Right lobe of liver (tissue), 6 donors: ENCODE measurements at regions of chr1 and their contacts with region 1.

Region 1: GRCh38 chr1:45686317-45687013 is at the start of gene GPBP1L1:
- DNase-seq: peak; percentile 99
- ATAC-seq: peak; percentile 82 to 90 (median 84)
- H3K4me3 ChIP-seq: peak within 1 kb of the TSS; percentile 60 to 90 (median 86)
- H3K27ac ChIP-seq: peak within 1 kb of the TSS; percentile 89 to 96 (median 93)
- H3K4me1 ChIP-seq: peaks cover 0 to 24% (median 9%) of the 10 kb centered on the region in 4 donors
- H3K27me3 ChIP-seq: no peaks in the 10 kb centered on the region
- CTCF ChIP-seq: no peak
- POLR2A ChIP-seq: no peak
- total RNA-seq, gene GPBP1L1: 51.2 to 80.0 (median 67.3) TPM

Region 2: DNA sequence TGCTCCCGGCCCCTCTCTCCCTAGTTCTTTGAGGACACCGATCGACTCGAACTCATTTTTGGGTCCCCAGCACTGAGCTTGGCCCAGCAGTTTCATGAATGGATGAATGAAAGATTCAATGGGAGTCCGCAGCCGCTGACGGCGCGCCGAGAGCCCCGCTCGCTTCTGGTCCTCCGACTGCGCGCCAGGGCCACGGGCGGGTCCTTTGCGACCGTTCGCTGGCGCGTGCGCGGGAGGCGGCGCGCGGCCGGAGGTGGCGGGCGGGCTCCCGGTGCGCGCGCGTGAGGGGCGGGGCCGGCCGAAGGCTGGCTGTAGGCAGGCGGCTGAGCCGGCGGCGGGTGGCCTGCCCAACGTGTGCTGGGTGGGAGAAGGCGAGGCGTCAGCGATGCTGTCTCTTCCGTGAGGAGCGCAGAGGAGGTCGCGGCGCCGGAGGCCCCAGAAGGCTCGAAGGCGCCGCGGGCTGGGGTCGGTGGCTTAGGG is 116.9 kb after region 1 on chr1 and contains the start of gene MAST2:
- intact Hi-C with region 1: loop called in 1 of 2 experiments (anchors 5 kb)
- DNase-seq: peak; percentile 92 to 95 (median 93)
- ATAC-seq: peak; percentile 89 to 98 (median 97)
- H3K4me3 ChIP-seq: peak within 1 kb of the TSS; percentile 40 to 64 (median 49)
- H3K27ac ChIP-seq: peak within 1 kb of the TSS; percentile 33 to 84 (median 51)
- H3K4me1 ChIP-seq: peaks cover 0 to 21% (median 2%) of the 10 kb centered on the region in 4 donors
- H3K27me3 ChIP-seq: no peaks in the 10 kb centered on the region
- CTCF ChIP-seq: no peak
- POLR2A ChIP-seq: peak; percentile 91
- total RNA-seq, gene MAST2: 9.9 to 14.9 (median 12.3) TPM